Sigmoid colon (tissue), 7 donors: ENCODE measurements at regions of chr11 and their contacts with region 1.

Region 1: GRCh38 chr11:88337181-88337986 is at the start of gene CTSC:
- DNase-seq: peak; percentile 96
- H3K4me3 ChIP-seq: peak within 1 kb of the TSS; percentile 64 to 80 (median 77)
- H3K27ac ChIP-seq: peak within 1 kb of the TSS; percentile 79 to 87 (median 83)
- H3K4me1 ChIP-seq: peaks cover 0 to 21% (median 7%) of the 10 kb centered on the region in 4 donors
- H3K27me3 ChIP-seq: no peaks in the 10 kb centered on the region
- CTCF ChIP-seq: no peak
- EP300 ChIP-seq: no peak
- POLR2A ChIP-seq: peak; percentile 17 to 53
- total RNA-seq, gene CTSC: 28.0 to 49.9 (median 45.0) TPM

Region 2: DNA sequence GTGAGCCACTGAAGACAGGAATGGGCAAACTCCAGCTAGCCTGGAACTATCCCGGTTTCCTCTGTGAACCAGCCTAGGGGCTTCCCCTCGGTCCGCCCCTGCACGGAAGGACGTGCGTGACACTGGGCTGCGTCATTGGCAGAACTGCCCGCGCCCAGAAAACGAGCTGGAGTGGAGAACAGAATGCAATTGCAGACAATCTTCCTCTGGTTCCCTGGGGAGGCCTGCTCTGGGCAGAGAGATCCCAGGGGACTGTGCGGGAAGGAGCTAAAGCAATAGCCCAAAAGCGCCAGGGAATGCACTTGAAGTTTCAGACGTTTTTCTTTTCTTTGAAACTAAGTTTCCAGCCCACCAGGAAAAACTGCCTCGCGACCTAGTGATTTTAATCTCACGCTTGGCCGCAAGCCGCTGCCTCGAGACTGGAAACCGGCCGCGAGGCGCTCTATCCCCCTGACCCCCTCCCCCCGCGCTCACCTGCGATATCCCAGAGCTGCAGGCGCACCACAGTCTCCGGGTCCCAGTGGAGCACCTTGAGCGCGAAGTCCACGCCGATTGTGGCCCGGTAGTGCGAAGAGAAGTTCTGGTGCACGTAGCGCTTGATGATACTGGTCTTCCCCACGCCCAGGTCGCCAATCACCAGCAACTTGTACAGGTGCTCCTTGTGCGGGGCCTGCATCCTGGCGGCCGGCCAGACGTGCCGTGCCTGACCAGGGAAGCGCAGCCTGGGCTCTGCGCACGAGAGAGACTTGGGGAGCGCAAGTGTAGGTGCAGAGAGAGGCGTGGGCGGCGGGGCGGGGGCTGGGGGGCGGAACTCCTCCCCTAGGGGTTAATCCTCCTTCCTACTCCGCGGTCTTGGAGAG is 162.4 kb before region 1 on chr11 and contains the start of gene RAB38:
- intact Hi-C with region 1: loop called (anchors 5 kb)
- DNase-seq: peak; percentile 85
- H3K4me3 ChIP-seq: peak within 1 kb of the TSS; percentile 15 to 49 (median 44)
- H3K27ac ChIP-seq: peak within 1 kb of the TSS; percentile 0 to 60 (median 27)
- H3K4me1 ChIP-seq: peaks cover 0 to 36% (median 32%) of the 10 kb centered on the region in 4 donors
- H3K27me3 ChIP-seq: no peaks in the 10 kb centered on the region
- CTCF ChIP-seq: no peak
- EP300 ChIP-seq: no peak
- POLR2A ChIP-seq: peak in 1 of 2 donors; percentile 14
- total RNA-seq, gene RAB38: 1.1 to 1.7 (median 1.2) TPM in 3 of 4 donors, not detected in the other

Region 3: GRCh38 chr11:88384673-88385005 is 47.3 kb after region 1 on chr11:
- intact Hi-C with region 1: no loop called
- DNase-seq: no peak
- H3K4me3 ChIP-seq: no peak overlapping the region
- H3K27ac ChIP-seq: peak overlapping the region in 3 of 4 donors; percentile 19 to 40 (median 36)
- H3K4me1 ChIP-seq: peaks cover 0 to 15% (median 6%) of the 10 kb centered on the region in 4 donors
- H3K27me3 ChIP-seq: no peaks in the 10 kb centered on the region
- CTCF ChIP-seq: no peak
- EP300 ChIP-seq: no peak
- POLR2A ChIP-seq: no peak

Region 4: GRCh38 chr11:88508759-88509581 is 171.6 kb after region 1 on chr11:
- intact Hi-C with region 1: no loop called
- DNase-seq: no peak
- H3K4me3 ChIP-seq: peak overlapping the region; percentile 17 to 46 (median 37)
- H3K27ac ChIP-seq: no peak overlapping the region
- H3K4me1 ChIP-seq: peaks cover 0 to 10% (median 3%) of the 10 kb centered on the region in 4 donors
- H3K27me3 ChIP-seq: peaks cover 0 to 35% (median 4%) of the 10 kb centered on the region in 3 donors
- CTCF ChIP-seq: no peak
- EP300 ChIP-seq: no peak
- POLR2A ChIP-seq: no peak

Region 5: GRCh38 chr11:88535916-88536547 is 198.6 kb after region 1 on chr11:
- intact Hi-C with region 1: loop called (anchors 10 kb)
- DNase-seq: no peak
- H3K4me3 ChIP-seq: no peak overlapping the region
- H3K27ac ChIP-seq: peak overlapping the region in 2 of 4 donors; percentile 19 to 60
- H3K4me1 ChIP-seq: peaks cover 0 to 15% (median 6%) of the 10 kb centered on the region in 4 donors
- H3K27me3 ChIP-seq: no peaks in the 10 kb centered on the region
- CTCF ChIP-seq: no peak
- EP300 ChIP-seq: no peak
- POLR2A ChIP-seq: no peak